Aorta (tissue), 5 donors: ENCODE measurements at regions of chrX and their contacts with region 1.

Region 1: GRCh38 chrX:150715184-150715583 is 22.0 kb downstream of the MTMR1 start:
- DNase-seq: no peak
- ATAC-seq: peak; percentile 24
- H3K4me3 ChIP-seq: no peak overlapping the region
- H3K27ac ChIP-seq: no peak overlapping the region
- H3K4me1 ChIP-seq: no peaks in the 10 kb centered on the region
- H3K27me3 ChIP-seq: no peaks in the 10 kb centered on the region

Region 2: GRCh38 chrX:150504397-150505182 is 210.6 kb before region 1 on chrX:
- intact Hi-C with region 1: no loop called
- DNase-seq: no peak
- ATAC-seq: no peak
- H3K4me3 ChIP-seq: no peak overlapping the region
- H3K27ac ChIP-seq: peak overlapping the region in 1 of 2 donors; percentile 67
- H3K4me1 ChIP-seq: no peaks in the 10 kb centered on the region
- H3K27me3 ChIP-seq: no peaks in the 10 kb centered on the region

Region 3: GRCh38 chrX:150683536-150684146 is 31.5 kb before region 1 on chrX:
- intact Hi-C with region 1: loop called (anchors 2 kb)
- DNase-seq: no peak
- ATAC-seq: no peak
- H3K4me3 ChIP-seq: no peak overlapping the region
- H3K27ac ChIP-seq: no peak overlapping the region
- H3K4me1 ChIP-seq: no peaks in the 10 kb centered on the region
- H3K27me3 ChIP-seq: no peaks in the 10 kb centered on the region